ENCODE measurements at regions of chr11 and their contacts with region 1.

Region 1: GRCh38 chr11:58579192-58580129 is 598 bp downstream of the ZFP91 start:
- DNase-seq: peak; percentile 85 to 93 (median 90)
- ATAC-seq: peak; percentile 60
- H3K4me3 ChIP-seq: peak overlapping the region; percentile 85
- H3K4me3 Mint-ChIP-seq: peak overlapping the region; percentile 95 to 100 (median 98)
- H3K27ac ChIP-seq: peak overlapping the region; percentile 98
- H3K27ac Mint-ChIP-seq: peak overlapping the region; percentile 98 to 100 (median 100)
- H3K4me1 ChIP-seq: peaks cover 42 to 58% of the 10 kb centered on the region in 2 donors
- H3K4me1 Mint-ChIP-seq: peaks cover 27 to 80% (median 70%) of the 10 kb centered on the region in 7 donors
- H3K27me3 ChIP-seq: no peaks in the 10 kb centered on the region
- H3K27me3 Mint-ChIP-seq: peaks cover 0 to 5% (median 0%) of the 10 kb centered on the region in 5 donors

Region 2: GRCh38 chr11:57324886-57325734 is 1254.4 kb before region 1 on chr11 and contains the start of gene TNKS1BP1:
- CTCF ChIA-PET with region 1: no interaction called
- POLR2A ChIA-PET with region 1: interaction called, 3 read pairs
- intact Hi-C with region 1: loop called in 1 of 2 experiments (anchors 1 kb)
- DNase-seq: peak; percentile 84 to 92 (median 90)
- ATAC-seq: peak; percentile 91
- H3K4me3 ChIP-seq: peak within 1 kb of the TSS; percentile 73
- H3K4me3 Mint-ChIP-seq: peak within 1 kb of the TSS; percentile 88 to 95 (median 91)
- H3K27ac ChIP-seq: peak within 1 kb of the TSS; percentile 79
- H3K27ac Mint-ChIP-seq: peak within 1 kb of the TSS; percentile 93 to 98 (median 95)
- H3K4me1 ChIP-seq: peaks cover 8 to 14% of the 10 kb centered on the region in 2 donors
- H3K4me1 Mint-ChIP-seq: peaks cover 30 to 58% (median 51%) of the 10 kb centered on the region in 7 donors
- H3K27me3 ChIP-seq: no peaks in the 10 kb centered on the region
- H3K27me3 Mint-ChIP-seq: no peaks in the 10 kb centered on the region
- total RNA-seq, gene TNKS1BP1: 11.2 to 22.0 (median 15.9) TPM

Region 3: DNA sequence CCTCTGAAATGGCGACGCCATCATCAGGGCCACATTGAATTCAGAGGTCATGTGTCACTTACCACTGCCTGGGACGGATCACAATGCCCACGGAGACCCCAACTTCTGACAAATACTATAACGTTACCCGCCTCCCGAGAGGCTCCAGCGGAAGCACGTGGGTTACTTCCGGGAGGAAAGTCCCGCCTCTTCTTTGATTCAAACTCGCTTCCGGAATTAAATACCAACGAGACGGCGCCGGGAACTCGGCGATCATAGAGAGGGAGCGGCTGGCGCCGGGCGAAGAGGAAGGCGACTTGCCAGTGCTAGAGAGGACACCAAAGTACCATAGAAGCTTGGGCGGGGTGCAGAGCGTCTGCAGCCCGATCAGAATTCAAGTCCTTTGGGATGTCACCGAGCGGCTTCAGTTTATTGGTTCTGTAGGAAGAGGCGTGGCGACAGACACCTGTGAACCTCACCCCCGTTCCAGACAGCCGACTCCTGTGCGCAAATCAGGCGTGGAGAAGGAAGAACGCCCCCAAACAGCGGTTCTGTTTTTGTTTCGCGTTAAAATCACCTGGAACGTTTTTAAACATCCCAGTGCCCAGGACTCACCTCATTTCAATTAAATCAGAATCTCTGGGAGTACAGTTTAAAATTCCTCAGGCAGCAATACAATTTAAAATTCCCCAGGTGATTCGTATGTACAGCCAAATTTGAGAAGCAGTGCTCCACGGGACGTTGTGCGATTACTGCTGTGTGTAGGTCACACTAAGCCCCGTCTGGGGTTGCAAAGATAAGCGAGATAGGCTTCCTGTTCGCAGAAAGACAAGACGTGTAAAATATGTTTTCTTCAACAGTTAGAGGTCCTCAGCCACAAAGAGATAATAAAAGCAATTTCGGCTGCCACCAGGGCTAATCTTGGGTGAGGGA is 1048.6 kb before region 1 on chr11 and contains the start of gene TIMM10:
- CTCF ChIA-PET with region 1: no interaction called
- POLR2A ChIA-PET with region 1: no interaction called
- intact Hi-C with region 1: loop called (anchors 1 kb)
- DNase-seq: peak; percentile 71 to 98 (median 95)
- ATAC-seq: peak; percentile 95
- H3K4me3 ChIP-seq: peak within 1 kb of the TSS; percentile 73
- H3K4me3 Mint-ChIP-seq: peak within 1 kb of the TSS; percentile 86 to 95 (median 91)
- H3K27ac ChIP-seq: peak within 1 kb of the TSS; percentile 91
- H3K27ac Mint-ChIP-seq: peak within 1 kb of the TSS; percentile 87 to 98 (median 95)
- H3K4me1 ChIP-seq: peaks cover 15 to 17% of the 10 kb centered on the region in 2 donors
- H3K4me1 Mint-ChIP-seq: peaks cover 6 to 43% (median 33%) of the 10 kb centered on the region in 7 donors
- H3K27me3 ChIP-seq: no peaks in the 10 kb centered on the region
- H3K27me3 Mint-ChIP-seq: no peaks in the 10 kb centered on the region
- total RNA-seq, gene TIMM10: 23.7 to 52.8 (median 34.7) TPM

Region 4: GRCh38 chr11:57644748-57645688 is 934.4 kb before region 1 on chr11:
- CTCF ChIA-PET with region 1: no interaction called
- POLR2A ChIA-PET with region 1: no interaction called
- intact Hi-C with region 1: no loop called
- DNase-seq: peak; percentile 61 to 91 (median 85)
- ATAC-seq: peak; percentile 87
- H3K4me3 ChIP-seq: no peak overlapping the region
- H3K4me3 Mint-ChIP-seq: no peak overlapping the region
- H3K27ac ChIP-seq: no peak overlapping the region
- H3K27ac Mint-ChIP-seq: peak overlapping the region in 2 of 9 donors; percentile 36 to 56
- H3K4me1 ChIP-seq: peaks cover 11 to 14% of the 10 kb centered on the region in 2 donors
- H3K4me1 Mint-ChIP-seq: peaks cover 25 to 60% (median 41%) of the 10 kb centered on the region in 7 donors
- H3K27me3 ChIP-seq: peaks cover 10 to 18% of the 10 kb centered on the region in 2 donors
- H3K27me3 Mint-ChIP-seq: peaks cover 30 to 60% (median 47%) of the 10 kb centered on the region in 5 donors

Region 5: GRCh38 chr11:57712256-57713150 is 867.0 kb before region 1 on chr11 and contains the start of gene TMX2:
- CTCF ChIA-PET with region 1: no interaction called
- POLR2A ChIA-PET with region 1: interaction called, 4 read pairs
- intact Hi-C with region 1: loop called (anchors 1 kb)
- DNase-seq: peak; percentile 73 to 96 (median 91)
- ATAC-seq: peak; percentile 94
- H3K4me3 ChIP-seq: peak within 1 kb of the TSS; percentile 98
- H3K4me3 Mint-ChIP-seq: peak within 1 kb of the TSS; percentile 86 to 99 (median 98)
- H3K27ac ChIP-seq: peak within 1 kb of the TSS; percentile 95
- H3K27ac Mint-ChIP-seq: peak within 1 kb of the TSS; percentile 87 to 99 (median 95)
- H3K4me1 ChIP-seq: peaks cover 25 to 33% of the 10 kb centered on the region in 2 donors
- H3K4me1 Mint-ChIP-seq: peaks cover 14 to 61% (median 52%) of the 10 kb centered on the region in 7 donors
- H3K27me3 ChIP-seq: no peaks in the 10 kb centered on the region
- H3K27me3 Mint-ChIP-seq: no peaks in the 10 kb centered on the region
- total RNA-seq, gene TMX2: 43.0 to 67.3 (median 64.8) TPM

Region 6: GRCh38 chr11:58562375-58562800 is 17.1 kb before region 1 on chr11:
- CTCF ChIA-PET with region 1: interaction called, 27 read pairs
- POLR2A ChIA-PET with region 1: interaction called, 60 read pairs
- intact Hi-C with region 1: no loop called
- DNase-seq: no peak
- ATAC-seq: peak; percentile 38
- H3K4me3 ChIP-seq: no peak overlapping the region
- H3K4me3 Mint-ChIP-seq: peak overlapping the region; percentile 32 to 79 (median 64)
- H3K27ac ChIP-seq: peak overlapping the region; percentile 12
- H3K27ac Mint-ChIP-seq: peak overlapping the region; percentile 28 to 89 (median 75)
- H3K4me1 ChIP-seq: peaks cover 24 to 41% of the 10 kb centered on the region in 2 donors
- H3K4me1 Mint-ChIP-seq: peaks cover 45 to 82% (median 64%) of the 10 kb centered on the region in 7 donors
- H3K27me3 ChIP-seq: no peaks in the 10 kb centered on the region
- H3K27me3 Mint-ChIP-seq: no peaks in the 10 kb centered on the region

Region 7: DNA sequence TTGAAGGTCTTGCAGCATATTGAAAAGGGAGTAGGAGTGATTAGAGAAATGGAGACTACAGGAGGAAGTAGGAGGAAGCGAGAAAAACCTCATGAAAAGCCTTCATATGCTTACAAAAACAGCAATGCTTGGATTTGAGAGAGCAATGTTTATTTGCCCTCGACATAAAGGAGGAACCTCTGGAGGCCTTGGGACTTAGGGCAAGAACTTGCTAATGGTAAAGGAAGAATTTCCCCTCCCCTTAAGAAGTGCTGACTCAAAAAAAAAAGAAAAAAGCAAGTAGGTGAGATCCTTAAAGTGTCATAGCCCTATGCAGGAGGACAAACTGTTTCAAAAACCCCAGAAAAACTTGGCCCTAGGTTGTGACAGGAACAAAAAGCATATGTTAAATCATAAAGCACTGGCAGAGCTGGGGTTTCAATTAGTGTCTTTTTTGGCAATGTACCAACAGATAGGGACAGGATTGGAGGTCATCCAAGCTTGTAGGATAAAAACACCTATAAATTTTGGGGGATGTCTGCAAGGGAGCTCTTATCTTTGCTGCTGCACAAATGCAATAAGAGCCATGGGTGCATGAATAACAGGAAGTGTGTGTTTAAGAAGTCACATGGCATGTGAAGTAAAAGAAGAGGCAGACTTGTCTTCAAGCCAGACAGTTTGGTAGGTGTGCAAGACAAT is 147.4 kb after region 1 on chr11:
- CTCF ChIA-PET with region 1: interaction called, 3 read pairs
- POLR2A ChIA-PET with region 1: interaction called, 7 read pairs
- intact Hi-C with region 1: loop called in 1 of 2 experiments (anchors 1 kb)
- DNase-seq: peak in 7 of 9 donors; percentile 39 to 79 (median 73)
- ATAC-seq: peak; percentile 84
- H3K4me3 ChIP-seq: no peak overlapping the region
- H3K4me3 Mint-ChIP-seq: peak overlapping the region; percentile 33 to 86 (median 62)
- H3K27ac ChIP-seq: peak overlapping the region; percentile 60
- H3K27ac Mint-ChIP-seq: peak overlapping the region; percentile 58 to 99 (median 97)
- H3K4me1 ChIP-seq: peaks cover 4 to 41% of the 10 kb centered on the region in 2 donors
- H3K4me1 Mint-ChIP-seq: peaks cover 16 to 67% (median 54%) of the 10 kb centered on the region in 7 donors
- H3K27me3 ChIP-seq: no peaks in the 10 kb centered on the region
- H3K27me3 Mint-ChIP-seq: no peaks in the 10 kb centered on the region

Region 8: DNA sequence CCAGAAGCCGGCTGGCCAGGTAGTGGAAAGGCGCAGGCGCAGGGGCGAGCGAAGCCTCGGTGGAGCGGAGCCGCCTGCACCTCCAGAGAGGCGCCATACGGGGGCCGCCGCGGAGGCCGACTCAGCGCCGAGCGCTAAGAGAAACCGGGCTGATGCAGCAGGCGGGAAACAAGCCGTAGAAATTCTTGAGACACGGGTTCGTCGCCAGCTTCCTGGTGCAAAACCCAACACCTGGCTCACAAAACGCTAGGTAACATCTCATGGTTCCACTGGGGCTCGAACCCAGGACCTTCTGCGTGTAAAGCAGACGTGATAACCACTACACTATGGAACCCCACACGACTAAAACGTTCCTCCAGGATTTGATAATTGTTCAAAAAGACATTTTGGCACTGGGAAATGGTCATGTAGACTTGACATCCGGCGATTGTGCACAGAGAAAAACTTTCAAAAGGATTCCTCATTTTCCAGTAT is 970.9 kb after region 1 on chr11:
- CTCF ChIA-PET with region 1: no interaction called
- POLR2A ChIA-PET with region 1: no interaction called
- intact Hi-C with region 1: loop called (anchors 2 kb)
- DNase-seq: peak; percentile 67 to 95 (median 89)
- ATAC-seq: peak; percentile 92
- H3K4me3 ChIP-seq: peak overlapping the region; percentile 59
- H3K4me3 Mint-ChIP-seq: peak overlapping the region; percentile 70 to 98 (median 92)
- H3K27ac ChIP-seq: peak overlapping the region; percentile 66
- H3K27ac Mint-ChIP-seq: peak overlapping the region; percentile 89 to 100 (median 98)
- H3K4me1 ChIP-seq: peaks cover under 1 to 4% of the 10 kb centered on the region in 2 donors
- H3K4me1 Mint-ChIP-seq: peaks cover 0 to 40% (median 32%) of the 10 kb centered on the region in 7 donors
- H3K27me3 ChIP-seq: no peaks in the 10 kb centered on the region
- H3K27me3 Mint-ChIP-seq: peaks cover 0 to 28% (median 0%) of the 10 kb centered on the region in 5 donors

Measured in naive thymus-derived CD4-positive, alpha-beta T cell (primary cell).